K562 (cell line): ENCODE measurements at regions of chr6 and their contacts with region 1.

Region 1: GRCh38 chr6:67877288-67877687 is 757.8 kb upstream of the ADGRB3 start:
- DNase-seq: peak in 1 of 4 experiments; percentile 51
- ATAC-seq: no peak
- H3K4me3 ChIP-seq: no peak overlapping the region
- H3K27ac ChIP-seq: peak overlapping the region; percentile 34; the same call in 2 of the 3 replicates
- H3K4me1 ChIP-seq: peaks cover 3 to 17% of the 10 kb centered on the region in 2 experiments; a peak in 4 of 5 replicates
- H3K27me3 ChIP-seq: no peaks in the 10 kb centered on the region
- CTCF ChIP-seq: no peak
- EP300 ChIP-seq: no peak
- POLR2A ChIP-seq: no peak
- RAD21 ChIP-seq: no peak

Region 2: DNA sequence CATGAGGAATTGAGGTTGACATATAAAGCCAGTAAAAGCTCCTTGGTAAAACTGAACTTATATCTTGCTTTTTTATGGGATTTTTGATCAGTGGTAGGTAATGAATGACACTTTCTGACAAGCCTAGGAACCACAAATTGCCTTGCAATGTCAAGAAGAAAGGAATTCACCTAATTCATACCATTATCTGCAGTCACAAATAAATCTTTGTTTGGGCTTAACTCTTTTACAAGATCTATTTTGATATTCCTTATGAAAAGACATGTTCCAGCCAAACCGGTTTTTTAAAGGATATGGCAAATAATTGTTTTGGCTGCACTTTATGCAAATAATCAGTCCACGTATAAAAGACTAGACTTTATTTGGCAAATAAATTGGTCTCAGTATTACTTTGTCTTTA is 14.0 kb before region 1 on chr6:
- CTCF ChIA-PET with region 1: no interaction called
- POLR2A ChIA-PET with region 1: interaction called, 11 read pairs
- in situ Hi-C with region 1: no loop called
- intact Hi-C with region 1: no loop called
- DNase-seq: no peak
- ATAC-seq: no peak
- H3K4me3 ChIP-seq: no peak overlapping the region
- H3K27ac ChIP-seq: no peak overlapping the region
- H3K4me1 ChIP-seq: no peaks in the 10 kb centered on the region
- H3K27me3 ChIP-seq: no peaks in the 10 kb centered on the region
- CTCF ChIP-seq: no peak
- EP300 ChIP-seq: no peak
- POLR2A ChIP-seq: no peak
- RAD21 ChIP-seq: no peak

Region 3: DNA sequence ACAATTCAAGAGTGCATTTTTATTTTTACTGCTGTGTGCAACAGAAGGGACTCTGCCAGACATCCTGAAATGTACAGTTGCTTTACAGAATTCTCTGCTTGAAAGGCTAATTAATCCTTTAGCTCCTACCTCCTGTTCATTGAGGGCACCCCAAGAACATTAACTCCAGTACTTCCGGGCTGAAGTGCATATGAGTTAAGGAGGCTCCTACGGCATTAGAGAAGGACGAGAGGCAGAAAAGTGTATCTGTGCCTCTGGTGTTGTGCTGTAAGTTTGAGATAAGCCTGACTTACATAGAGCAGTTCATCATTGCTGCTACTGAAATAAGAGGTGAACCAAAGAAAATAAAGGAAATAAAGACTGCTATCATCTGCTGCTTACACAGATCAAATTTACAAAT is 148.5 kb after region 1 on chr6:
- CTCF ChIA-PET with region 1: no interaction called
- POLR2A ChIA-PET with region 1: no interaction called
- in situ Hi-C with region 1: no loop called
- intact Hi-C with region 1: no loop called
- DNase-seq: peak; percentile 14 to 83 (median 44)
- ATAC-seq: peak; percentile 96
- H3K4me3 ChIP-seq: no peak overlapping the region
- H3K27ac ChIP-seq: peak overlapping the region; percentile 89
- H3K4me1 ChIP-seq: peaks cover 0 to 16% of the 10 kb centered on the region in 2 experiments; a peak in 4 of 5 replicates
- H3K27me3 ChIP-seq: no peaks in the 10 kb centered on the region
- CTCF ChIP-seq: no peak
- EP300 ChIP-seq: peak; percentile 62; the same call in 1 of the 2 replicates
- POLR2A ChIP-seq: no peak
- RAD21 ChIP-seq: no peak